ENCODE measurements at regions of chr12 and their contacts with region 1.

Region 1: GRCh38 chr12:54324617-54325441 is at the start of gene COPZ1:
- DNase-seq: peak; percentile 88 to 100
- H3K4me3 ChIP-seq: peak within 1 kb of the TSS; percentile 93
- H3K27ac ChIP-seq: peak within 1 kb of the TSS; percentile 92
- H3K4me1 ChIP-seq: peaks cover 37% of the 10 kb centered on the region
- H3K27me3 ChIP-seq: no peaks in the 10 kb centered on the region
- CTCF ChIP-seq: peak; percentile 92
- total RNA-seq, gene COPZ1: 232 and 265 TPM in 2 replicates

Region 2: GRCh38 chr12:54134850-54135249 is 190.0 kb before region 1 on chr12:
- CTCF ChIA-PET with region 1: no interaction called
- POLR2A ChIA-PET with region 1: no interaction called
- intact Hi-C with region 1: no loop called
- DNase-seq: no peak
- H3K4me3 ChIP-seq: no peak overlapping the region
- H3K27ac ChIP-seq: no peak overlapping the region
- H3K4me1 ChIP-seq: no peaks in the 10 kb centered on the region
- H3K27me3 ChIP-seq: peaks cover 19% of the 10 kb centered on the region
- CTCF ChIP-seq: no peak; the same call in 1 of the 2 replicates

Region 3: GRCh38 chr12:54191550-54192022 is 133.2 kb before region 1 on chr12:
- CTCF ChIA-PET with region 1: no interaction called
- POLR2A ChIA-PET with region 1: interaction called, 12 read pairs
- intact Hi-C with region 1: no loop called
- DNase-seq: peak; percentile 60 to 74
- H3K4me3 ChIP-seq: no peak overlapping the region
- H3K27ac ChIP-seq: no peak overlapping the region
- H3K4me1 ChIP-seq: peaks cover 34% of the 10 kb centered on the region
- H3K27me3 ChIP-seq: peaks cover 13% of the 10 kb centered on the region; the same call in 1 of the 2 replicates
- CTCF ChIP-seq: peak; percentile 77

Region 4: DNA sequence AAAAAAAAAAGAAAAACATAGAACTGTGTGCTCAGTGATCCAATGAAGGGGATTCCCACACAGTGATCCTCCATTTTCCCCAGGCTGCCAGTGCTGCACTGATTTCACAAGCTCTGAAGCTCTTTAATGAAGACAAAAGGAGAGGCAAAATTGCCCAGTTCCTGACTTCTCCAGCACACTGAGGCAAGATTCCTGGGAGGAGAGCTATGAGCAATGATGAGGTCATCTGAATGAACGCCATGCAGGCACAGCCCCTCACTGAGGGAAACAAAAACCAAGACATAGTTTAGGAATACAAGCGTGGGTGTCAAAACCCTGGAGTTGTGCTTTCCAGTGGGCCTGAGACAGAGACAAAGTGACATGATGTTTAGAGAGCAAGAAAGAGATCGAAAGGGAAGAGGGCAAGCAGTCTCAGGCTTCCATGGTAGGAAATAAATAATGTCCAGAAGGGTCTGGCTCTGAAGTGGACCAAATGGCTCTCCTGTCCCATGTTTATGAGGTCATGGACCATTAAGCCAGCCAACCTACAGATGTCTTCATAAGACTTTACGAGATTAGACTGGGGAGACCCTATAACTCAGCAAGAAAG is 95.1 kb before region 1 on chr12:
- CTCF ChIA-PET with region 1: interaction called, 13 read pairs
- POLR2A ChIA-PET with region 1: no interaction called
- intact Hi-C with region 1: no loop called
- DNase-seq: peak; percentile 33 to 48
- H3K4me3 ChIP-seq: no peak overlapping the region
- H3K27ac ChIP-seq: peak overlapping the region; percentile 47
- H3K4me1 ChIP-seq: peaks cover 10% of the 10 kb centered on the region
- H3K27me3 ChIP-seq: no peaks in the 10 kb centered on the region
- CTCF ChIP-seq: no peak

Region 5: GRCh38 chr12:54259194-54260011 is 65.4 kb before region 1 on chr12:
- CTCF ChIA-PET with region 1: interaction called, 12 read pairs
- POLR2A ChIA-PET with region 1: no interaction called
- intact Hi-C with region 1: no loop called
- DNase-seq: no peak
- H3K4me3 ChIP-seq: no peak overlapping the region
- H3K27ac ChIP-seq: no peak overlapping the region
- H3K4me1 ChIP-seq: peaks cover 10% of the 10 kb centered on the region; the same call in 1 of the 2 replicates
- H3K27me3 ChIP-seq: no peaks in the 10 kb centered on the region
- CTCF ChIP-seq: no peak

Region 6: GRCh38 chr12:54287261-54288157 is 37.3 kb before region 1 on chr12:
- CTCF ChIA-PET with region 1: interaction called, 8 read pairs
- POLR2A ChIA-PET with region 1: interaction called, 10 read pairs
- intact Hi-C with region 1: no loop called
- DNase-seq: no peak
- H3K4me3 ChIP-seq: no peak overlapping the region
- H3K27ac ChIP-seq: peak overlapping the region; percentile 19
- H3K4me1 ChIP-seq: peaks cover 30% of the 10 kb centered on the region
- H3K27me3 ChIP-seq: no peaks in the 10 kb centered on the region
- CTCF ChIP-seq: no peak

Region 7: DNA sequence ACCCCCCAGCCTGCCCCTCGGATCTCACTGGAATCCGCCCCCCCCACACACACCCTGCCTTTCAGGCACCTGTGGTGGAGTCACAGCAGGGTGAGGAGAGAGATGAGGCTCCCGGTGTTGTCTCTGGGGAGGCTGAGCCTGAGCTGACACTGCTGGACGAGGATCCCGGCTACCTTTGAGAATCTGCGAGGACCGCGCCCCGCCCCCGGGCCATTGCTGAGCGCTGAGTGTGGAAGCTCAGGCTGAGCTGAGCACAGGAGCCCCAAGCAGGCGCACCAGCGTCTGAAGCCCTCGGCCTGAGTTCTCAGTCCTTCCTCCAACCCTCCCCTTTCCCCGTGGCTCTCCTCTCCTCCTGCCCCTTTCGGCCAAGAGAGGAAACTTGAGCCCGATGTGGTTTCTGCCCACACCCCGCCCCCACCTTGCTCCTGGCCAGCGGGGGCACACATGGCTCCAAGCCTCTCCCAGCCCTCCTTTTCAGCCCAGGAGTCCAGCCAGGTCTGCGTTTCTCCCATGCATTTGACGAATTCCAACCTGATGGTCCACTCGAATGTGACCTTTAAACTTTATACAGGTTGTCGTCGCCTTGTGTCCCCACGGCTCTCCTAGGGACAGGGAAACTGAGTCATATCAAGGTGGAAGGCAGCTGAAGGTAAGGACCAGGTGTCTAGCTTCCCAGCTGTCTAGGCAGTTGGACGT is 23.9 kb before region 1 on chr12 and contains the start of gene NFE2:
- CTCF ChIA-PET with region 1: interaction called, 33 read pairs
- POLR2A ChIA-PET with region 1: interaction called, 43 read pairs
- intact Hi-C with region 1: no loop called
- DNase-seq: peak; percentile 81 to 82
- H3K4me3 ChIP-seq: peak within 1 kb of the TSS; percentile 46; the same call in 1 of the 2 replicates
- H3K27ac ChIP-seq: no peak within 1 kb of the TSS
- H3K4me1 ChIP-seq: peaks cover 46% of the 10 kb centered on the region
- H3K27me3 ChIP-seq: no peaks in the 10 kb centered on the region
- CTCF ChIP-seq: no peak; the same call in 1 of the 2 replicates
- total RNA-seq, gene NFE2: 1.5 and 1.7 TPM in 2 replicates

Region 8: DNA sequence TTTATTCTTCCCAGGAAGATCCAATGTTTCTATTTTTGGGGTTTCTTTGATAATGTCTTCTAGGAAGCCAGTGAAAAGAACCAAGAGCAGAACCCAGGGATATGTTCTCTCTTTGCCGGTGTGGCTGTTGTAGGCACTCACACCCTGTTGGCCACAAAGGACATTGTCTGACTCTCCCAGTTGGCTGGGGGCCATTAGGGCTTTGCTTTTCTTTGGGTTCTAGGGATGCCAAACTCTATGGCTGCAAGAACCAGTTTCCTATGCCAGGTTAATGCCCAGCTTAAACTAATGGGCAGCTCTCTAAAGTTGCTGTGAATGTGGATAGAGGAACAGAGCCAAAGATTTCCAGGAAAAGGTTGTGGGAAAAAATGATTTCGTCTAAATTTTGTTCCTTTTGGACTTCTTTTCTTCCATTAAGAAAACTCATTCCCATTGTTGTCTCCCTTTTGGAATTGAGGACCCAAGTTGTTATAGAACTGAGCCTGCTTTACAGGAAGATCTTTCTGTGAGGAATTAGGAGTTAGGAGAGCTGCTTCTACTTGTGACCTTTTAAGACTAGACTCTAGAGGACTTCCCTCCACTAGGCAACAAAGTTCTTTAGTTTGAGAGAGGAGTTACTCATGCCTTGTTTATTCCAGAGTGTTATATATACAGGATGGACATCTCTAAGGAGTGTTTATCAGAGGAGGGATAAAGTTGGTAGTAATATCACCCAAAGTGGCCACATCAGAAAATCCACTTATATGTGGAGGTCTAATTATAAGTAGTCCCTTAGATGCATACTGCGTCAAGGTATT is 13.2 kb after region 1 on chr12:
- CTCF ChIA-PET with region 1: interaction called, 12 read pairs
- POLR2A ChIA-PET with region 1: interaction called, 32 read pairs
- intact Hi-C with region 1: no loop called
- DNase-seq: no peak
- H3K4me3 ChIP-seq: no peak overlapping the region
- H3K27ac ChIP-seq: no peak overlapping the region
- H3K4me1 ChIP-seq: no peaks in the 10 kb centered on the region
- H3K27me3 ChIP-seq: no peaks in the 10 kb centered on the region
- CTCF ChIP-seq: no peak

Measured in PC-9 (cell line).